Naive thymus-derived CD4-positive, alpha-beta T cell (primary cell): ENCODE measurements at regions of chr2 and their contacts with region 1.

Region 1: DNA sequence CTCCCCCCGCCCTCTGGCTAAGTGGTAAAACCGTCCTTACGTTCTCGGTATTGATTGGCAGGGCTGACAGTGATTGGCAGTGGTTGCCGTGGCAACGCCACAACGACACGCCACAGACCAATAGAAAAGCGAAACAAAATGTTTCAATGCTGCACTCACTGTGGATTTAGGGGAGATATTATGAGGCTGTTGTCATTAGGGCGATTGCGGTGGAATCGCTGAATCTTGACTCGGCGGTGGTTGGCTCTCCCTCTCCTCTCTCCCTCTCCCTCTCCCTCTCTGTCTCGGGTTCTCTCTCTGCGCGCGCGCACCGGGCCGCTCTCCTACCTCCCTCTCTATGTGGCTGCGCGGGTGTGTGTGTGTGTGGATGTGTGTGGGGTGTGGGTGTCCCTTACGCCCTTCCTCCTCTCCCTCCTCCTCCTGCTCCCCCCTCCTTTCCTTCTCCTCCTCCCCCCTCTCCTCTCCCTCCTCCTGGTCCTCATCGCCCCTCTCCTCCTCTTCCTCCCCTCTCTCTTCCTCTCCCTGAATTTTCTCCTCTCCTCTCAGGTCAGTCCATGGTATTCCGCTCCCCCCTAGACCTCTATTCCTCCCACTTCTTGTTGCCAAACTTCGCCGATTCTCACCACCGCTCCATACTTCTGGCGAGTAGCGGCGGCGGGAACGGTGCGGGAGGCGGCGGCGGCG is at the start of gene SIX3:
- DNase-seq: peak in 4 of 9 donors; percentile 16 to 28 (median 20)
- ATAC-seq: peak; percentile 46
- H3K4me3 ChIP-seq: peak within 1 kb of the TSS; percentile 35
- H3K4me3 Mint-ChIP-seq: peak within 1 kb of the TSS; percentile 75 to 90 (median 80)
- H3K27ac ChIP-seq: no peak within 1 kb of the TSS
- H3K27ac Mint-ChIP-seq: peak within 1 kb of the TSS in 3 of 9 donors; percentile 3 to 62 (median 46)
- H3K4me1 ChIP-seq: no peaks in the 10 kb centered on the region
- H3K4me1 Mint-ChIP-seq: peaks cover 18 to 66% (median 49%) of the 10 kb centered on the region in 7 donors
- H3K27me3 ChIP-seq: peaks cover 0 to 10% of the 10 kb centered on the region in 2 donors
- H3K27me3 Mint-ChIP-seq: peaks cover 53 to 86% (median 73%) of the 10 kb centered on the region in 5 donors
- total RNA-seq, gene SIX3: not detected

Region 2: DNA sequence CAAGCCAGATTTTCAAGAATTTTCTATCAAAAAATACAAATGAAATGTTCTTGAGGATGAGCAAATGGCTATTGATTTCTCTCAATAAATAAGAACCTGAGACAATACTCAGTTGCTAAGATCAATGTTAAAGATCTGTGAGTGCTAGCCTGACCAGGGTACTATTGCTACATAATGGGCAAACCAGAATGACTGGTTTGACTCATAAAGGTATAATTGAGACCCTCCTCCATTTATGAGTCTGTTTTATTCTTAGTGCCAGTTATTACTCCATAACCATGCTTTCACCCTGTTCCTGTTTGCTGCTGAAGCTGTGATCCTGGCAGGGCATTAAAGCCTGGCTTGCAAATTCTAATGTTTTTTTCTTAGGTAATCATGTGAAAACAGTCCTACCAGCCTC is 829.6 kb before region 1 on chr2:
- CTCF ChIA-PET with region 1: no interaction called
- POLR2A ChIA-PET with region 1: no interaction called
- intact Hi-C with region 1: no loop called
- DNase-seq: no peak
- ATAC-seq: no peak
- H3K4me3 ChIP-seq: no peak overlapping the region
- H3K4me3 Mint-ChIP-seq: no peak overlapping the region
- H3K27ac ChIP-seq: no peak overlapping the region
- H3K27ac Mint-ChIP-seq: no peak overlapping the region
- H3K4me1 ChIP-seq: no peaks in the 10 kb centered on the region
- H3K4me1 Mint-ChIP-seq: peaks cover 0 to 3% (median 0%) of the 10 kb centered on the region in 7 donors
- H3K27me3 ChIP-seq: no peaks in the 10 kb centered on the region
- H3K27me3 Mint-ChIP-seq: peaks cover 0 to 5% (median 4%) of the 10 kb centered on the region in 5 donors

Region 3: DNA sequence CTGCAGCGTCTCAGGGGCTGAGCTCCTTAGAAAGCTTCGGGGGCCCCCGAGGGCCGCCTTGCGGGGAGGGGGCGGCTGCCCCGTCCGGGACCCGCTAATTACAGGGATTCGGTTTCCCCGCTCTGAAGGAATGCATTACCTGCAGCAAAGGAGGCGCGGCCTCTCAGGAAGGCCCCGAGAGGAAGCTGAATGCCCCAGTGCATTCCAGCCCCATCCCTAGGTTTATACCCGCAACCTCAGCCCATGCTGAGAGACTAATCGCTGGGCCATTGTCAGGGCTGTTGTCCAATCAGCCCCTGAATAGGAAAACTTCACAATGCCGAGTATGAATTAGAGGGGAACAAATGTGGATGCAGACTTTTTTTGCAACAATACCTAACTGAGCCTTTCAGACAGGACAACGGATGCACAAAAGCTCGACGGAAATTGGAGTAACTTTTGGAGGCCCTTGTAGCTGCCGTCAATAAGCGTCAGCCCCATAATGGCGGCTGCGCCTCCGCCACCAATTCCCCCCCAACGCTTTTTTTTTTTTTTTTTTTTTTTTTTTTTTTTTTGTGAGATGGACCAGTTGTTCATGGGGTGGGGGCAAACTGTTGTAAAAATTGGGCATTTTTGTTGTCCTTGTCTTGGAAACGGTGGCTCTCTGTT is 138.8 kb before region 1 on chr2:
- CTCF ChIA-PET with region 1: no interaction called
- POLR2A ChIA-PET with region 1: no interaction called
- intact Hi-C with region 1: loop called in 1 of 2 experiments (anchors 5 kb)
- DNase-seq: no peak
- ATAC-seq: no peak
- H3K4me3 ChIP-seq: no peak overlapping the region
- H3K4me3 Mint-ChIP-seq: peak overlapping the region in 7 of 10 donors; percentile 18 to 80 (median 36)
- H3K27ac ChIP-seq: no peak overlapping the region
- H3K27ac Mint-ChIP-seq: no peak overlapping the region
- H3K4me1 ChIP-seq: peaks cover 0 to 7% of the 10 kb centered on the region in 2 donors
- H3K4me1 Mint-ChIP-seq: peaks cover 0 to 23% (median 18%) of the 10 kb centered on the region in 7 donors
- H3K27me3 ChIP-seq: peaks cover 4 to 23% of the 10 kb centered on the region in 2 donors
- H3K27me3 Mint-ChIP-seq: peaks cover 77 to 91% (median 87%) of the 10 kb centered on the region in 5 donors